Left ventricle myocardium superior (tissue), 1 donor: ENCODE measurements at regions of chr15 and their contacts with region 1.

Region 1: GRCh38 chr15:92881802-92882696 is 18.1 kb upstream of the CHD2 start:
- DNase-seq: peak; percentile 98
- ATAC-seq: peak; percentile 96

Region 2: GRCh38 chr15:92831655-92832328 is 50.3 kb before region 1 on chr15:
- intact Hi-C with region 1: loop called (anchors 5 kb)
- DNase-seq: peak; percentile 94
- ATAC-seq: peak; percentile 98